ENCODE measurements at regions of chr2 and their contacts with region 1.

Region 1: DNA sequence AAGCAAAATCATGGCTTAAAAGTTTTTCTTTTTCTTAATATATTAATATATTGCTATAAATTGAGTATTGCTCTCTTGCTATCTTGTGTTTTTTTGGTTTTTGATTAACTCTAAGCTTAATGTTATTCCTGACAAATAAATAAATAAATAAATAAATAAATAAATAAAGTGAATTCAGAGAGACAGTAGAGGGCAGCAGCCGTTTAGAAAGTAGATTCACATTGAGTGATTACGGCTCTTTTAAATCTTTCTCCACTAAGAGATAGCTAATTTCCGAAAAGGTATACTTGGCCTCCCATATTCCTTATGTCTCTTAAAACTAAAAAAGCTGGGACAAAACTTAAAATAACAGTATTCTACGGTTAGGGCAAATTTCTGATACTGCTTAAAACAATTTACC is 34.3 kb downstream of the MSH2 start:
- DNase-seq: peak; percentile 48
- H3K4me3 ChIP-seq: no peak overlapping the region
- H3K27ac ChIP-seq: no peak overlapping the region
- H3K4me1 ChIP-seq: no peaks in the 10 kb centered on the region
- H3K27me3 ChIP-seq: no peaks in the 10 kb centered on the region
- CTCF ChIP-seq: no peak
- POLR2A ChIP-seq: no peak

Region 2: GRCh38 chr2:47088668-47089462 is 348.4 kb before region 1 on chr2:
- CTCF ChIA-PET with region 1: no interaction called
- POLR2A ChIA-PET with region 1: no interaction called
- dilution Hi-C with region 1: no loop called
- intact Hi-C with region 1: no loop called
- DNase-seq: peak; percentile 95
- H3K4me3 ChIP-seq: no peak overlapping the region
- H3K27ac ChIP-seq: peak overlapping the region; percentile 93
- H3K4me1 ChIP-seq: peaks cover 52% of the 10 kb centered on the region
- H3K27me3 ChIP-seq: no peaks in the 10 kb centered on the region
- CTCF ChIP-seq: no peak
- POLR2A ChIP-seq: peak; percentile 31

Region 3: DNA sequence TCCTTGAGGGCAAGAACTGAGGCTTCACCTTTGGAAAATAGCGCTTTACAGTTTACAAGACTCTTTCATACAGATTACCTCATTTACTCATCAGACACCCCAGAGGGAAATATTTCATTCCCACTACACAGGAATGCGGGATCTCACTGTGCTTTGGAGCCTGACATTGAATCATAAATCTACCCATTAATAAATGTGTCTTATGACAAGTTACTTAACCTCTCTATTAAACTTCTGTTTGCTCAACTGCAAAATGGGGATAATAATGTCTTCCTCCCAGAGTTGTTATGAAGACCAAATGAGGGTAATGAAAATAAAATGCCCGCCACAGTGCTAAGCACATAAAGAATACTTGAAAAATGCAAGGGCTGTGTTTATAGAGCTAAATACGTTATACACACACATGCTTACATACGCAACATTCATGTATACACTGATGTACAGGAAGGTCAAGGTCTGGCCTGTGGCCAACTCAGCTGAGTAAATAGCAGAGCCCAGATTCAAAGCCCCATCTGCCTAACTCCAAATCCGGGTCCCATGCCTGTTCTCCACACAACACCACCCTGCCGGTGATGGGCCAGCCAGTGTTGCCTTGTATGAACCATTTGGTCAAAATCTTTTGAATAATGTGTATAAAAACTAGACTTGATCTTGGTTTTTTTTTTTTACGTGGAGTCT is 204.4 kb before region 1 on chr2:
- CTCF ChIA-PET with region 1: no interaction called
- POLR2A ChIA-PET with region 1: no interaction called
- dilution Hi-C with region 1: no loop called
- intact Hi-C with region 1: no loop called
- DNase-seq: peak; percentile 59
- H3K4me3 ChIP-seq: no peak overlapping the region
- H3K27ac ChIP-seq: no peak overlapping the region
- H3K4me1 ChIP-seq: no peaks in the 10 kb centered on the region
- H3K27me3 ChIP-seq: no peaks in the 10 kb centered on the region
- CTCF ChIP-seq: no peak
- POLR2A ChIP-seq: no peak

Region 4: DNA sequence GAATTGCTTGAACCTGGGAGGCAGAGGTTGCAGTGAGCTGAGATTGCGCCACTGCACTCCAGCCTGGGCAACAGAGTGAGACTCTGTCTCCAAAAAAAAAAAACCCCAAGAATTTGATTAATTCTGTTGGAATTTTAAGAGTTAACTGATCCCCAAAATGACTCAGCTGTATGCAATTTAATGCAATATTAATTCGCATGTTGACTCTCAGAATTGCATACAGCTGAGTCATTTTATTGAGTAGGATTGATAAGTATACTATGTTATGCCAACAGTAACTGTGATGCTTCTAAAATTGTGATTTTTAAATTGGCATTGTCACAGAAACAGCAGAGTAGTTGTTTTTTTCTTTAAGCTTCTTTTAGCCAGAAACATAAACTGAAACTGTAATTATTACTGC is 14.7 kb before region 1 on chr2:
- CTCF ChIA-PET with region 1: interaction called, 17 read pairs
- POLR2A ChIA-PET with region 1: no interaction called
- dilution Hi-C with region 1: no loop called
- intact Hi-C with region 1: no loop called
- DNase-seq: peak; percentile 13
- H3K4me3 ChIP-seq: no peak overlapping the region
- H3K27ac ChIP-seq: peak overlapping the region; percentile 75
- H3K4me1 ChIP-seq: peaks cover 3% of the 10 kb centered on the region
- H3K27me3 ChIP-seq: no peaks in the 10 kb centered on the region
- CTCF ChIP-seq: no peak
- POLR2A ChIP-seq: no peak

Region 5: DNA sequence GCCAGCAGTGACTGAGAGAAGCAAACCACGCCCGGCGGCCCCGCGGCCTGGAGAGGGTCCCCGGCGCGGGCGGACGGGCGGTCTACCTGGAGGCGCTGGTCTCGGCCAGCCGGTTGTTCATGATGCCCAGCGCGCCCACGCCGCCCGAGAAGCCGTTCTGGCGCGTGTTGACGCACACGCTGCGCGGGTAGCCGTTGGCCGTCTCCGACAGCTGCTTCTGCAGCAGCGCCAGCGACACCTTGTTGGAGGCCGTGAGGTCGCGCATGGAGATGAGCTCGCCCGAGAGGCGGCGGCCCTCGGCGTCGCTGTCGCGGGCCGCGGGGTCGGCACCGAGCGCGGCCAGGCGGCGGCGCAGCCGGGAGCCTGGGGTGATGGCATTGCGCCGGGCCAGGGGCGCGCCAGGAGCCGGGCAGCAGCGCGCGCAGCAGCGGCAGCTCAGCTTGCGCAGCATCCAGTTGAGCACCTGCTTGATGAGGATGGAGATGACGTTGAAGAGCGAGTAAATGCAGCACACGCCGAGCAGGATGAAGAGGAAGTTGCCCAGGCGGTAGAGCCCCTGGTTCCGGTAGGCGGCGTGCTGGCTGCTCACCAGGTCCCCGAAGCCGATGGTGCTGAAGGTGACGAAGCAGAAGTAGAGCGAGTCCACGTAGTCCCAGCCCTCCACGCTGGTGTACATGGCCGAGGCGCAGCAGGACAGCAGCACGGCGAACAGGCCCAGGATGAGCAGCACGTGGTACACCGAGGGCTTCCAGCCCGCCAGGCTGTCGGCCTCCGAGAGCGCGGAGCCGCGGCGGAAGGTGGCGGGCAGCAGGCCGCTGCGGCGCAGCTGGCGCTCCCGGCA is 83.8 kb after region 1 on chr2:
- CTCF ChIA-PET with region 1: interaction called, 14 read pairs
- POLR2A ChIA-PET with region 1: no interaction called
- dilution Hi-C with region 1: no loop called
- intact Hi-C with region 1: no loop called
- DNase-seq: peak; percentile 57
- H3K4me3 ChIP-seq: peak overlapping the region; percentile 11 to 17 (median 16)
- H3K27ac ChIP-seq: no peak overlapping the region
- H3K4me1 ChIP-seq: peaks cover 3% of the 10 kb centered on the region
- H3K27me3 ChIP-seq: no peaks in the 10 kb centered on the region
- CTCF ChIP-seq: peak; percentile 12 to 30
- POLR2A ChIP-seq: no peak

Region 6: DNA sequence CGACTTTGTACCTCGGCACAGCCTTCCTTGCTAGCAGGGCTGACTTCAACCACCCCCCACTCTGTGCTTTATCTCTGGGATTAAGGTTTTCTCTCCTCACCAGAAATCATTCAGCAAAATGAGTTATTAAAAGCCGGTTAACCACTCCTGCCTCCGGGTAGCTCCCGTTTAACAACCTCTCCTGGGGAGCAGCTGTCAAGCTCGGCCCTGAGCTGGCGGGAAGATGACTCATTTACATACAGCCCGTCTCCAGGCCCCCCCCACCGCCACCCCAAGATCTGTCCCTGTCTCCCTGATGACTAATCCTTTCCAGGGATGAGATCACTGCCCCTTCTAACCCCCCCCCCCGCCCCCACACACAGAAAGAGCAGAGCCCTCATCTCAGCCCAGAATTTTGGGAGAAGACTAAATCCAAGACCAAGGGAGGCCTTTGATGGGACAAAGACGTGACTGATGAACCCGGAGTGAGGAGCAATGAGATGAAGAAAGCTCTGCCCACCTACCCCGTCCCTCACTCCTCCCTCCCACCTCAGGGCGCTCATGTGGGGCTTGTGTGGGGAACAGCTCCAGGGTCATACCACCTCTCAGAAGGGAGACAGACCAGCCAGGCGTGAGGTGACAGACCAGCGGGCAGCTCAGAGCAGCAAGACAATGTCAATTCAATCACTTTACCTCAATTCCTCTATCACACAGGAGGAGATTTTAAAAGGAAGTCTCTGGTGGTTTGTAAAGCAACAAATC is 97.1 kb after region 1 on chr2:
- CTCF ChIA-PET with region 1: interaction called, 24 read pairs
- POLR2A ChIA-PET with region 1: no interaction called
- dilution Hi-C with region 1: no loop called
- intact Hi-C with region 1: no loop called
- DNase-seq: peak; percentile 49
- H3K4me3 ChIP-seq: no peak overlapping the region
- H3K27ac ChIP-seq: peak overlapping the region; percentile 46
- H3K4me1 ChIP-seq: peaks cover 27% of the 10 kb centered on the region
- H3K27me3 ChIP-seq: no peaks in the 10 kb centered on the region
- CTCF ChIP-seq: no peak
- POLR2A ChIP-seq: no peak

Region 7: GRCh38 chr2:47751875-47752357 is 314.6 kb after region 1 on chr2:
- CTCF ChIA-PET with region 1: interaction called, 10 read pairs
- POLR2A ChIA-PET with region 1: no interaction called
- dilution Hi-C with region 1: no loop called
- intact Hi-C with region 1: no loop called
- DNase-seq: no peak
- H3K4me3 ChIP-seq: no peak overlapping the region
- H3K27ac ChIP-seq: no peak overlapping the region
- H3K4me1 ChIP-seq: no peaks in the 10 kb centered on the region
- H3K27me3 ChIP-seq: peaks cover 0 to 2% of the 10 kb centered on the region in 2 experiments
- CTCF ChIP-seq: no peak
- POLR2A ChIP-seq: no peak

Region 8: DNA sequence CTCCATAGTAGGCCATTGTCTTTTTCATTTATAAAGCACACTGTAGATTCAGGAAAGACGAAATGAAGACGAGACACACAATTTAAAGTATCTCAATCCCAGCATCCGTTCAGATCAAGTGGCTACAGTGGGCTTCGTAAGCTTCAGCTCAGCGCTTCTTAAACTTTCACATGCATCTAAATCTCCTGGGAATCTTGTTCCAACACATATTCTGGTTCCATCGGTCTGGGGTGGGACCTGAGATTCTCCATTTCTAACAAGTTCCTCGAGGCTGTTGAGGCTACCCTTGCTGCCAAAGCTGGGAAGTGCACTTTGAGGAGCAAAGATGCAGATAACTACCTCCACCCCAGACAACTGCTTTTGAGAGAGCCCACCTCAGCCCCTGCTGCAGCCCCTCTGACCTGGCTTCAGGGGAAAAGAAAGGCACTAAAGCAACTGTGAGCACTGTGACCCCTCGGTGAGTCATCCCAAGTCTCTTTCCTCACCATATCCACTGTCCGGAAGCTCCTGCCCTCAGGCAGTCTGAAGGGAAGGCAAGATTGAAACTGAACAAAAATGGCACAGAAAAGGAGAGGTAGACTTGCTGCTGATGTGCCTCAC is 670.1 kb after region 1 on chr2:
- CTCF ChIA-PET with region 1: interaction called, 11 read pairs
- POLR2A ChIA-PET with region 1: no interaction called
- dilution Hi-C with region 1: no loop called
- intact Hi-C with region 1: loop called (anchors 1 kb)
- DNase-seq: peak; percentile 76
- H3K4me3 ChIP-seq: no peak overlapping the region
- H3K27ac ChIP-seq: peak overlapping the region; percentile 77
- H3K4me1 ChIP-seq: peaks cover 30% of the 10 kb centered on the region
- H3K27me3 ChIP-seq: no peaks in the 10 kb centered on the region
- CTCF ChIP-seq: no peak
- POLR2A ChIP-seq: no peak

Region 9: DNA sequence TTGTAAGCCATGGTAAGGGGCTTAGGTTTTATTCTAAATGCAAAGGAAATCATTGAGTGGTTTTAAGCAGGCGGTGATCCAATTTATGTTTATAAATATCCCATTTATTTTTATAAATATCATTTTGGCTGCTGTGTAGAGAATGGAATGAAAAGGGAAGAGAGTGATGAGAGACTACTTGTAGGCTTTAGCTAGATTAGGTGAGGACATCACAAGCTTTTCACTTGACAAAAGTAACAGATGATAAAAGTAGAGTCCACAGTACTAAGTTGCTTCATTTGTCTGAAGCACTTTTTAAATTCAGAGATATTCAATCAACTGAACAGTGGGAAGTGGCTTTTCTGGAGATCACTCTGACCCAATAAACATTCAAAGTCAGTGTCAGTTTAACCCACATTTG is 1782.5 kb after region 1 on chr2:
- CTCF ChIA-PET with region 1: no interaction called
- POLR2A ChIA-PET with region 1: no interaction called
- dilution Hi-C with region 1: no loop called
- intact Hi-C with region 1: no loop called
- DNase-seq: no peak
- H3K4me3 ChIP-seq: no peak overlapping the region
- H3K27ac ChIP-seq: no peak overlapping the region
- H3K4me1 ChIP-seq: no peaks in the 10 kb centered on the region
- H3K27me3 ChIP-seq: no peaks in the 10 kb centered on the region
- CTCF ChIP-seq: no peak
- POLR2A ChIP-seq: no peak

Measured in endothelial cell of umbilical vein (primary cell).